Tibial artery (tissue), 4 donors: ENCODE measurements at regions of chr2 and their contacts with region 1.

Region 1: DNA sequence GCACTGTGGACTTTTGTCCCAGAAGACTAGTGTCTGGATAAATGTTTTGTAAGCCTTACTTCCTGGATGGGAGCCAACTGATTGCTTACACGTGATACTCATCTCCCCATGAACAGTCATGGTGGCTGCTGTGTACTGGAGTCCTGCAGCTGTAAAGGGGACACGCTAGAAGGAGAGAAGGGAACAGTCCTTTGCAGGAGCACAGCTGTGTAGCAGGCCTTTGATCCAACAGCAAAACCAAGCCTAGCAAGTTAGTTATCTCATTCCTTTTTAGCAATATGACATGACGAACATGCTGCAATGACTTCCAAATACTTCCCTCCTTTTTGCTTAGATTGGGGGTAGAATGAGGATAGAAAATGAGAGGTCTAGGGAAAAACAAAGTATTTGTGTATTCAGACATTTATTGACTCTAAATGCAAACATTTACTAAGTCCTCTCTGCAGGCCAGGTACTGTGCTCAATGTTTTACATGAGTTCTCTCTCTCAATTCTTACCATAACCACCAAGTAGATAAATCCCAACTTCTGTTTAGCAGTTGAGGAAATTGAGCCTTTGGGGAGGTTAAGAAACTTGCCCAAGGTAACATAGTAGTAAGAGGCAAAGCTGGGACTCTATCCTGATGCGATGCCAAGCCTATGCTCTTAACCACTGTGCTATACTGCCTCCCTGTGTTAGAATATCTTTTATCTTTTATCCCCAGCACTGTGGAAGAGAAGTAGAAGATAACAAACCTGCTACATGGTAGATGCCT is 55.4 kb upstream of the CD28 start:
- DNase-seq: no peak
- H3K4me3 ChIP-seq: no peak overlapping the region
- H3K27ac ChIP-seq: peak overlapping the region; percentile 44 to 53
- H3K4me1 ChIP-seq: peaks cover 0 to 35% (median 25%) of the 10 kb centered on the region in 4 donors
- H3K27me3 ChIP-seq: no peaks in the 10 kb centered on the region
- CTCF ChIP-seq: peak; percentile 45 to 56

Region 2: DNA sequence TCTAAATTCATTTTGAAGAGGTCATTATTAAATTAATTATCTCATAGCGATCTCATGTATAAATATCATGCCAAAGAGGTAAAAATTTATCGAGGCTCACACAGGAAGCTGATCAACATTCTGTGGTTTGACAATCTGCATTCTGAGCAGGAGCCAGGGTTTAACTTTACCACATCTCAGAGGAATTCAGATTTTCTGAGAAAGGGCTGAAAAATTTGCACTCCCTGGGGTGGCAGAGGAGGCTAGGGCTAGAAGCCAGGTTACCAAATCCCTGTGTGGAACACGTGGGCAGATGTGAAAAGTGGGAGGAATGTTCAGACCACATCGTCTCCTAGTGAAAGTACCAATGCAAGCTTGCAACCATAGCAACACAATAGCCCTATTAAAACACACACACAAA is 153.0 kb after region 1 on chr2:
- intact Hi-C with region 1: no loop called
- DNase-seq: peak; percentile 48 to 79
- H3K4me3 ChIP-seq: no peak overlapping the region
- H3K27ac ChIP-seq: peak overlapping the region; percentile 44 to 62
- H3K4me1 ChIP-seq: peaks cover 0 to 40% (median 13%) of the 10 kb centered on the region in 4 donors
- H3K27me3 ChIP-seq: no peaks in the 10 kb centered on the region
- CTCF ChIP-seq: no peak

Region 3: DNA sequence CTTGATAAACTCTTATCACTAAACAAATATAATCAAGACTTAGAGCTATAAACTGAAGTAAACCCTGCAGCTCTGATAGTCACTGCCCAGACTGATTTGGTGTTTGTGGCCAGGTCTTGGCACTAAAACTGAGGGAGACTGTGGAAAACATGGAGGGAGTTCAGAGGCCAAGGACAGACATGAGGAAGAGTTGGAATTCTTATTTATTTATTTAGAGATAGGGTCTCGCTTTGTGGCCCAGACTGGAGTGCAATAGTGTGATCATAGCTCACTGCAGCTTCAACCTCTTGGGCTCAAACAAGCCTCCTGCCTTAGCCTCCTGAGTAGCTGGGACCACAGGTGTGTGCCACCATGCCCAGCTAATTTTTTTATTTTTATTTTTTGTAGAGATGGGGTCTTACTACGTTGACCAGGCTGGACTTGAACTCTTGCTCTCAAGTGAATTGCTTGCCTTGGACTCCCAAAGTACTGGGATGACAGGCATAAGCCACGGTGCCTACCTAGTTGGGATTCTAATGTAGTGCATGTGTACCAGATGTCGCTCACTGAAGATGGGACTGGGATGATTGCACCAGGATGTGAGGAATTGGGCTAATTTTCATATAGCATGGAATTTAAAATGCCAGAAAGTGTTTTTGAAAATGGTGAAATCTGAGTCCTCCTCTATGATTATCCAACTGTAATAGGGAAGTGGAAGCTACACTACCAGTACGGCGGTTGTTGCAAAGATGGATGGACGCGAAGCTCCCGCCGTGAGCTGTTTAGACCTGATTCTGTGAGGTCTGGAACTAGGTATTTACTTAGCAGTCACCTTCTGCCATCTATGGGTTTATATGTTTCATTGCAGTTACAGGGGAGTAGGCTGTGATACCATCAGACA is 163.9 kb after region 1 on chr2:
- intact Hi-C with region 1: loop called (anchors 10 kb)
- DNase-seq: peak in 1 of 2 donors; percentile 50
- H3K4me3 ChIP-seq: no peak overlapping the region
- H3K27ac ChIP-seq: no peak overlapping the region
- H3K4me1 ChIP-seq: peaks cover 0 to 29% (median 21%) of the 10 kb centered on the region in 4 donors
- H3K27me3 ChIP-seq: no peaks in the 10 kb centered on the region
- CTCF ChIP-seq: peak; percentile 85 to 88